Dorsolateral prefrontal cortex (tissue), 120 donors: ENCODE measurements at regions of chr7 and their contacts with region 1.

Region 1: DNA sequence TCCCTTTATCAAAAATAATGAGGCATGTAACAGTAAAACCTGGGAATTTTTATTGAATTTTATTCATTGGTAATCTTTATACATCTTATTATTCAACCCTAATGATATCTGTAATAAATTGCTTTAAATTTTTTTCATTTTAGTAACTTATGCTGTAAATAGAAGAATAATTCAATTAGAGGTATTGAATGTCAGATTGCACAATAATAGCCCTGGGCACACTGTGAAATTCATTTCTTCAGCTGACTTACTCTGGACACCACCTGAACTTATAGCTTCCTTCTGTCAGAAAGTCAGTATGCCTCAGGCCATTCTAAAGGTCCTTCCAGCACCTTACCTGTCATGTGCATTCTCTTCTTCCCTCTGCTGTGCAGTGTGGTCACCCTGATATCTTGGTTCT is 59.2 kb downstream of the ADAM22 start:
- DNase-seq: no peak
- H3K4me3 ChIP-seq: no peak overlapping the region
- H3K27ac ChIP-seq: no peak overlapping the region
- H3K27me3 ChIP-seq: no peaks in the 10 kb centered on the region
- CTCF ChIP-seq: no peak

Region 2: DNA sequence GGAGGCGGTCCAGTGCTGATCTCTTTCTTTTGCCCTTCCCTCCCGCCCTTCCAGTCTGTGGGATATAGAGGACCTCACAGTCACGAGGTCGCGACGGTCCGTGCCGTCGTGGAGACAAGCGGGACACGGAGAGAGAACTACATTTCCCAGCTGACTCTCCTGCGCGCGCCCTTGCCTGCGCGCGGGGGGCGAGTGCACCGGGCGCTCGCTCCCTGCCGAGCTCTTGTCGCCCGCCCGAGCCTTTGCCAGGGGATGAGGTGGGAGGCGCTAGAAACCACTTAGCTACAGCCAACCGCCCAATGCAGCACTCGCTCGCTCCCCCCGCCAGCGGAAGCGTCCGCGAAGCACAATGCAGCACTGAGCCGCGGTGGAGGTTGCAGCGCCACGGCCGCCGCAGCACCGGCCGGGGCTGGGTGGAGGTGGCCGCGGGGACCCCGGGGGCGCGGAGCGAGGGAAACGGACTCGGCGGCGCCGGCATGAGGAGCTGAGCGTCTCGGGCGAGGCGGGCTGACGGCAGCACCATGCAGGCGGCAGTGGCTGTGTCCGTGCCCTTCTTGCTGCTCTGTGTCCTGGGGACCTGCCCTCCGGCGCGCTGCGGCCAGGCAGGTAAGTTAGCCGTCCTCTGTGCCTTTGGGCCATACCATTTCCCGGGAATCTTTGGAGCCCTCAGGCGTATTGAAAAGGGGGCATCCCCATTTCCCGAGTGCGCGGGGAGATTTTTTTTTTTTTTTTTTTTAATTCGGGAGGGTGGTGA is 59.1 kb before region 1 on chr7 and contains the start of gene ADAM22:
- intact Hi-C with region 1: no loop called
- DNase-seq: peak; percentile 88 to 97 (median 96)
- H3K4me3 ChIP-seq: peak within 1 kb of the TSS; percentile 56 to 96 (median 86)
- H3K27ac ChIP-seq: peak within 1 kb of the TSS; percentile 59 to 96 (median 90)
- H3K27me3 ChIP-seq: no peaks in the 10 kb centered on the region
- CTCF ChIP-seq: peak in 53 of 56 donors; percentile 5 to 71 (median 48)
- total RNA-seq, gene ADAM22: 44.2 to 138 (median 99.9) TPM

Region 3: DNA sequence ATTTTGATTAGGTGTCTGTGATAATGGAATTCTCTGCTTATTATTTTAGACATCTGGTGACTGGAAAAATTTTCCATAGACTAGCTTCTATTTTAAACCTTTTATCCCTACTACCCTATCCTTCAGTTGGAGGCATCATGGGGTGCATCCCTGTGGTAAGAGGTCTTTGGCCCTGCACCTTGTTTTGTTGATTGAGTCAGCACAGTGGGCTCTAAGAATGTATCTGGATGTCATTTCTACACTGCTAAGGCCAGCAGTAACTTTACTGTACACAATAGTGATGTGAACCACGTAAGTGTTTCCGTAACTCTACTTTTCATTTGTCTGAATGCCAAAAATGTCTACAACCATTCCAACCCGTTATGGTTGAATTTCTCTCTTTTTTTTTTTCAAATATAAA is 16.4 kb after region 1 on chr7:
- intact Hi-C with region 1: loop called in 1 of 2 experiments (anchors 2 kb)
- DNase-seq: no peak
- H3K4me3 ChIP-seq: no peak overlapping the region
- H3K27ac ChIP-seq: no peak overlapping the region
- H3K27me3 ChIP-seq: no peaks in the 10 kb centered on the region
- CTCF ChIP-seq: no peak

Region 4: DNA sequence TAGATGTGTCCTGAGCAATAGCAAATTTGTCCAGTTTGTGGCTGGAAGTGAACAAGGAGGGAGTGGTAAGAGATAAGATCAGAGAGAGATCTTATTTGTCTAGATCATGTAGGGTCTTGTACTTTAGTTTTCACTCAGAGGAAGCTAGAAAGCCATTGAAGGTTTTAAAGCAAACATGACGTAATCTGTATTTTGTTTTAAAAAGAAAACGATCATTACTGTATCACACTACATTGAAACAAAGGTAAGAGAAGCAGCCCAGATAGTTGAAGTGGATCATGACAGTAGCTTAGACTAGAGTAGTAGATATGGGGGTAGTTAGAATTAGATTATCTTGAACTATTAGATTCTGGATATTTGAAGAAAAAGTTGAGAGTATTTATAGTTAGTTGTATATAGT is 742.7 kb after region 1 on chr7:
- intact Hi-C with region 1: no loop called
- DNase-seq: no peak
- H3K4me3 ChIP-seq: no peak overlapping the region
- H3K27ac ChIP-seq: no peak overlapping the region
- H3K27me3 ChIP-seq: peaks cover 0 to 5% (median 0%) of the 10 kb centered on the region in 45 donors
- CTCF ChIP-seq: no peak